Transverse colon (tissue), 4 donors: ENCODE measurements at regions of chr1 and their contacts with region 1.

Region 1: GRCh38 chr1:160366731-160367515 is at the start of gene NHLH1:
- DNase-seq: no peak
- H3K4me3 ChIP-seq: no peak within 1 kb of the TSS
- H3K27ac ChIP-seq: no peak within 1 kb of the TSS
- H3K4me1 ChIP-seq: no peaks in the 10 kb centered on the region
- H3K27me3 ChIP-seq: peaks cover 5% of the 10 kb centered on the region
- CTCF ChIP-seq: no peak
- EP300 ChIP-seq: no peak
- POLR2A ChIP-seq: no peak
- total RNA-seq, gene NHLH1: not detected

Region 2: DNA sequence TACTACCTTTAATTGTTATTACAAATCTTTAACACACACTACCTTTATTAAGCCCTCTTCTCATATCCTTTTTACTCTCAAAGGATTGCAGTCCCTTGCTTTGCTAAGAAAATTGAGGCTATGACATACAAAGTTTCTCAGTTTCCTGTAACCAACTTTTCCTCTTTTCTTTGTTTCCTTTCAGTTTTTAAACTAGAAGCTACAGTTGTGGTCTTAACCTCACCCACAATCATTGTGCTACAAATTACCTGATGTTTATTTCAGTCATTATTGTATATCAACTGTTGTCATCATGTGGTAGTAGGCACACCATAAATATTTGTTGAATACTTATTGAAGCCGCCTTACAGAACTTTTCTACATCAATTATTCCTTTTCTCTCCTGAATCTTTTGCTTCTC is 104.3 kb after region 1 on chr1:
- in situ Hi-C with region 1: no loop called
- intact Hi-C with region 1: no loop called
- DNase-seq: no peak
- H3K4me3 ChIP-seq: no peak overlapping the region
- H3K27ac ChIP-seq: no peak overlapping the region
- H3K4me1 ChIP-seq: no peaks in the 10 kb centered on the region
- H3K27me3 ChIP-seq: no peaks in the 10 kb centered on the region
- CTCF ChIP-seq: no peak
- EP300 ChIP-seq: no peak
- POLR2A ChIP-seq: no peak

Region 3: GRCh38 chr1:160534823-160535605 is 168.1 kb after region 1 on chr1:
- in situ Hi-C with region 1: no loop called
- intact Hi-C with region 1: loop called (anchors 5 kb)
- DNase-seq: no peak
- H3K4me3 ChIP-seq: no peak overlapping the region
- H3K27ac ChIP-seq: no peak overlapping the region
- H3K4me1 ChIP-seq: peaks cover 0 to 23% (median 10%) of the 10 kb centered on the region in 4 donors
- H3K27me3 ChIP-seq: no peaks in the 10 kb centered on the region
- CTCF ChIP-seq: no peak
- EP300 ChIP-seq: no peak
- POLR2A ChIP-seq: no peak